ENCODE measurements at regions of chr4 and their contacts with region 1.

Region 1: DNA sequence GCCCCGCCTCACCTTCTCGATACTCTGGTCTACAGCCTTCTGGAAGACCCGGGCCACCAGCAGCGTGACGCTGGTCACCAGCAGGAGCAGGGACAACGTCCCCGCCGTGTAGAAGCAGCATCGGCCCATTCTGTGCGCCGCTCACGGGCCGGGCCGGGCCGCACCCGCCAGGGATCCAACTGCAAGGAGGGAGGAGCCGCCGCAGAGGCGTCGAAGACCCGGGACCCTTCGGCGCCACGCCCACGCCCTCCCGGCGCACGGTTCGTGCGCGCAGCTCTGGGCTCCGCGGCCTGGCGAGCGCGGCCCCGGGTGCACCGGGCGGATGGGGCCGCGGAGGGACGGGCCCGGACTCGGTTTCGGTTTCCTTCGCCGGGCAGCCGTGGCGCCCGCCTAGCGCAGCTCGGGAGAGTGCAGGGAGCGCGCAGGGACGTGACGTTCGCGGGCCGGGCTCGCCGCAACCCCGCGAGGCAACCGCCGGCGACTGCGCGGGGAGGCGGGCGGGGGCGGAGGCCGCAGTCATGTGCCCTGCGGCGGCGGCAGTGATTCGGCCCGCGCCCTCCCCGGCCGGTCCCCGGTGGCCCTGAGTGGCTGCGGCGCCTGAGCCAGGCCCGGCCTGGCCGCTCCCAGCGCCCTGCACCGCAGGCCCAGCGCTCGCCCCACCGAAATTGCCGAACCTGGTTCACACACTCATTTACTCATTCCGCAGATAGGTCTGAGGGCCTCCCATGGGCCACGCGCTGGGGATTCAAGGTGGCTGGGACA is at the start of gene SCARB2:
- DNase-seq: peak; percentile 56 to 94
- H3K4me3 ChIP-seq: peak within 1 kb of the TSS; percentile 92 to 97
- H3K27ac ChIP-seq: peak within 1 kb of the TSS; percentile 97 to 99
- H3K4me1 ChIP-seq: peaks cover 15 to 46% of the 10 kb centered on the region in 2 donors
- H3K27me3 ChIP-seq: no peaks in the 10 kb centered on the region
- CTCF ChIP-seq: no peak
- total RNA-seq, gene SCARB2: 94.1 TPM

Region 2: DNA sequence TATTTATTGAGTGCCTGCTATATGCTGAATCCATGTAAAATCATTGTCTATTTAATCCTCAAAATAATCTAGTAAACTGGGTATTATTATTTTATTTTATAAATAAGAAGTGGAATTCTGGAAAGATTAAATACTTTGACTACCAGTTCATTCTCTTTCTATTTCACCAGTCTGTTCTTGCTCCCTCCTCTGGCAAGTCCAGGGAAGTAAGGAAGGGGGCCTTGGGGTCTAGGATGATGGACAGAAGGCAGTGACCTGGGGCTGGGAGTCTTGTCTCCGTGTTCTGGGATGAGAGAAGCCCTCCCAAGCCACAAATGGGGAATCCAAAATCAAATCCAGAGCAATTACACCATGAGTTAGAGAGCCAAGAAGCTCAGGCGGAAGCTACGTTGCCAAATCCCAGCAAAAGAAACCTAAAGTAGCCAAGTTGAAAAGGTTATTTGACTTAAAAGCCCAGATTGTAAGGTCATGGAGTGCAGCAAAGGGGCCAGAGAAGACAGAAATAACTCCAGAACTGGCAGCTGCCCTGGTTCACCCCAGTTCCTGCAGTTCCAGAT is 1309.0 kb before region 1 on chr4:
- intact Hi-C with region 1: no loop called
- DNase-seq: no peak
- H3K4me3 ChIP-seq: no peak overlapping the region
- H3K27ac ChIP-seq: no peak overlapping the region
- H3K4me1 ChIP-seq: no peaks in the 10 kb centered on the region
- H3K27me3 ChIP-seq: no peaks in the 10 kb centered on the region
- CTCF ChIP-seq: no peak

Region 3: DNA sequence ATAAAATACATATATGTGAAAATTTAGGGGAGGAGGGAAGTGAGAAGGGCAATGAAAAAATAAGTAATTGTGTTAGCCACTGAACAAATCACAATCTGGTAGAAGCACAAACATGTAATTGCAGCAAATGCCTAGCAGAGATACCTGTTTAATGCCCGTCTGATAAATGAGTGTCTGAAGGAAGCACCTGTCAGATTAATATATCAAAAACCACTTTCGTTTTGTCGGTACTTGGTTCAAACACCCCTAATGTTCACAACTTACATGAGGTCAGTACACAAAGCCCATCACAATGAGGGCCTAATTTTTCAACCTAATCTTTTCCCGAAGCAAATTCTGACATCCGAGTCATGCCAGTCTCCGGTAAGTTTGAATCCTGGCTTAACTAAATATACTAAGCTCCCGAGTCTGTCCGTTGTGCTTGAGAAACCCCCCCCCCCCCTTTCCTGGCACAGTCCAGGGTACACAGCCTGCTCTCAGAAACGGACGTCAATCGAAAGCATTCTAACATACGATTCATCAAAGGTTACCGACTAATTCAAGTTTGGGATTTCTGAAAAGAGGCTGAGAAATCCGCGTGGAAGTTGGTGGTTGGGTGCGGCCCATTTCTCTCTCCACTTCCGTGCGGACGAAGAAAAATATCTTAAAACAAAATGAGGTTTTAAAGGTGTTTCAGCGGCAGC is 223.6 kb before region 1 on chr4:
- intact Hi-C with region 1: loop called (anchors 5 kb)
- DNase-seq: no peak
- H3K4me3 ChIP-seq: peak overlapping the region; percentile 67 to 80
- H3K27ac ChIP-seq: peak overlapping the region; percentile 65 to 68
- H3K4me1 ChIP-seq: peaks cover 0 to 5% of the 10 kb centered on the region in 2 donors
- H3K27me3 ChIP-seq: no peaks in the 10 kb centered on the region
- CTCF ChIP-seq: no peak

Region 4: GRCh38 chr4:76095568-76095967 is 118.0 kb before region 1 on chr4:
- intact Hi-C with region 1: no loop called
- DNase-seq: no peak
- H3K4me3 ChIP-seq: no peak overlapping the region
- H3K27ac ChIP-seq: no peak overlapping the region
- H3K4me1 ChIP-seq: no peaks in the 10 kb centered on the region
- H3K27me3 ChIP-seq: no peaks in the 10 kb centered on the region
- CTCF ChIP-seq: no peak

Region 5: GRCh38 chr4:76148142-76148865 is 65.3 kb before region 1 on chr4 and contains the start of gene NUP54:
- intact Hi-C with region 1: loop called (anchors 1 kb)
- DNase-seq: peak; percentile 81 to 98
- H3K4me3 ChIP-seq: peak within 1 kb of the TSS; percentile 85 to 95
- H3K27ac ChIP-seq: peak within 1 kb of the TSS; percentile 87 to 88
- H3K4me1 ChIP-seq: peaks cover 0 to 24% of the 10 kb centered on the region in 2 donors
- H3K27me3 ChIP-seq: no peaks in the 10 kb centered on the region
- CTCF ChIP-seq: no peak
- total RNA-seq, gene NUP54: 20.2 TPM

Region 6: GRCh38 chr4:76198411-76199237 is 15.0 kb before region 1 on chr4:
- intact Hi-C with region 1: loop called (anchors 2 kb)
- DNase-seq: no peak
- H3K4me3 ChIP-seq: no peak overlapping the region
- H3K27ac ChIP-seq: peak overlapping the region; percentile 71
- H3K4me1 ChIP-seq: peaks cover 10 to 54% of the 10 kb centered on the region in 2 donors
- H3K27me3 ChIP-seq: no peaks in the 10 kb centered on the region
- CTCF ChIP-seq: no peak

Region 7: GRCh38 chr4:76251441-76252270 is 38.1 kb after region 1 on chr4 and contains the start of gene FAM47E:
- intact Hi-C with region 1: loop called (anchors 2 kb)
- DNase-seq: peak; percentile 10 to 83
- H3K4me3 ChIP-seq: peak within 1 kb of the TSS; percentile 75 to 76
- H3K27ac ChIP-seq: no peak within 1 kb of the TSS
- H3K4me1 ChIP-seq: no peaks in the 10 kb centered on the region
- H3K27me3 ChIP-seq: no peaks in the 10 kb centered on the region
- CTCF ChIP-seq: peak; percentile 17 to 42 (median 17)
- total RNA-seq, gene FAM47E: not detected

Region 8: GRCh38 chr4:76305971-76306881 is 92.6 kb after region 1 on chr4 and contains the start of gene STBD1:
- intact Hi-C with region 1: loop called (anchors 2 kb)
- DNase-seq: peak; percentile 44 to 85
- H3K4me3 ChIP-seq: peak within 1 kb of the TSS; percentile 68 to 72
- H3K27ac ChIP-seq: peak within 1 kb of the TSS; percentile 79 to 87
- H3K4me1 ChIP-seq: peaks cover 0 to 15% of the 10 kb centered on the region in 2 donors
- H3K27me3 ChIP-seq: no peaks in the 10 kb centered on the region
- CTCF ChIP-seq: peak in 2 of 3 experiments; percentile 1 to 7
- total RNA-seq, gene STBD1: 19.9 TPM

Region 9: DNA sequence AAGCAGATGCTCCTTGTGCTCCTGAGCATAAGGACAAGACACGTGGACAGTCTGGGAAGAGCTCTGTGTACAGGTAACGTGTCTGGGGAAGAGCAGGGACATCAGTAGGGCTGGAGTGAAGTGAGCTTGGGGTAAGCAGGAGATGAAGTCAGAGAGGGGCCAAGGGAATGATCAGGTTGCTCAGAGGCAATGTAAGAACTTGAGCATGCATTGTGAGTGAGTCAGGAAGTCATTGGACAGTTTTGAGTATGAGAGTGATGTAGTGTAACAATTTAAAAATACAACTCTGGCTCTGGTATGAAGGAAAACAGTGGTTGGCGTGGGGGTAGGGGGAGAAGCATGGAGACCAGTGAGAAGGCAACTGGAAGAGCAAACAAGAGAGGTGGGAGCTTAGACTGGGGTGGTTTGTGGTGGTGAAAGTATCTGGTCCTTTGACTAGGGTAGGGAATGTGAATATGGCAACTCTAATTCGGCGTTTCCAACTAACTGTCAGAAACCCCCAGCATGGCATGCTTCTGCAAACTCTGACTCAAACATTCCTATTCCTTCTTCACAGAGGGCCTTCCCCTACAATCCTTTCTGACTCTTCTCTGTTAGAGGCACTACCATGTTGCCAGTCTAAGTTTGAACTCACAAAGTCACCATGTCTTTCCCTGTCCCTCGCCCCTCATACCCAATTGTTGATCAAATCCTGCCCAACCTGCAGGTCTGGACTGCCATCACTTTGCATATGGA is 150.1 kb after region 1 on chr4:
- intact Hi-C with region 1: no loop called
- DNase-seq: no peak
- H3K4me3 ChIP-seq: no peak overlapping the region
- H3K27ac ChIP-seq: no peak overlapping the region
- H3K4me1 ChIP-seq: no peaks in the 10 kb centered on the region
- H3K27me3 ChIP-seq: no peaks in the 10 kb centered on the region
- CTCF ChIP-seq: no peak

Region 10: DNA sequence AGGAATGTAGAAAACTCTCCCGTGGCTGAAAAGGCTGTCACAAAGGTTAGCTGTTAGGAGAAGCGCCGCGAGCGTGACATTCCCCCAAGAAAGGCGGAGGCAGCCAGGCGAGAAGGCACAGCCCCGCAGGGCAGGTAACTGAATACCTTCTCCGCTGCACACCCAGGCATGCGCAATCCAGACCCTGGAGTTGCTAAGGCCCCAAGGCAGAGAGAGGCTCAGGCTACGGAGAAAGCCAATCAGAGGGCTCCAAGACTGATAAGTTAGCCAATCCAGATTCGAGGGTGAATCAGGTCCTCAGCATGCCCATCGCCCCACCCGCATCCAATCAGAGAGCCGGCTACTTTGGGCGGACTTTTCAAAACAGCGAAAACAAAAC is 942.9 kb after region 1 on chr4:
- intact Hi-C with region 1: loop called (anchors 5 kb)
- DNase-seq: peak; percentile 93 to 99
- H3K4me3 ChIP-seq: peak overlapping the region; percentile 96 to 98
- H3K27ac ChIP-seq: peak overlapping the region; percentile 92 to 97
- H3K4me1 ChIP-seq: peaks cover 0 to 7% of the 10 kb centered on the region in 2 donors
- H3K27me3 ChIP-seq: no peaks in the 10 kb centered on the region
- CTCF ChIP-seq: no peak

Measured in ascending aorta (tissue), 2 donors.